HCT116 (cell line): ENCODE measurements at regions of chrX and their contacts with region 1.

Region 1: GRCh38 chrX:149950681-149951080 is 12.4 kb upstream of the EOLA2 start:
- DNase-seq: peak; percentile 45
- ATAC-seq: peak; percentile 83
- H3K4me3 ChIP-seq: no peak overlapping the region
- H3K27ac ChIP-seq: no peak overlapping the region
- H3K4me1 ChIP-seq: no peaks in the 10 kb centered on the region
- H3K27me3 ChIP-seq: no peaks in the 10 kb centered on the region
- CTCF ChIP-seq: peak; percentile 59 to 63 (median 61); a peak in 5 of 6 replicates
- POLR2A ChIP-seq: no peak
- RAD21 ChIP-seq: peak; percentile 63

Region 2: DNA sequence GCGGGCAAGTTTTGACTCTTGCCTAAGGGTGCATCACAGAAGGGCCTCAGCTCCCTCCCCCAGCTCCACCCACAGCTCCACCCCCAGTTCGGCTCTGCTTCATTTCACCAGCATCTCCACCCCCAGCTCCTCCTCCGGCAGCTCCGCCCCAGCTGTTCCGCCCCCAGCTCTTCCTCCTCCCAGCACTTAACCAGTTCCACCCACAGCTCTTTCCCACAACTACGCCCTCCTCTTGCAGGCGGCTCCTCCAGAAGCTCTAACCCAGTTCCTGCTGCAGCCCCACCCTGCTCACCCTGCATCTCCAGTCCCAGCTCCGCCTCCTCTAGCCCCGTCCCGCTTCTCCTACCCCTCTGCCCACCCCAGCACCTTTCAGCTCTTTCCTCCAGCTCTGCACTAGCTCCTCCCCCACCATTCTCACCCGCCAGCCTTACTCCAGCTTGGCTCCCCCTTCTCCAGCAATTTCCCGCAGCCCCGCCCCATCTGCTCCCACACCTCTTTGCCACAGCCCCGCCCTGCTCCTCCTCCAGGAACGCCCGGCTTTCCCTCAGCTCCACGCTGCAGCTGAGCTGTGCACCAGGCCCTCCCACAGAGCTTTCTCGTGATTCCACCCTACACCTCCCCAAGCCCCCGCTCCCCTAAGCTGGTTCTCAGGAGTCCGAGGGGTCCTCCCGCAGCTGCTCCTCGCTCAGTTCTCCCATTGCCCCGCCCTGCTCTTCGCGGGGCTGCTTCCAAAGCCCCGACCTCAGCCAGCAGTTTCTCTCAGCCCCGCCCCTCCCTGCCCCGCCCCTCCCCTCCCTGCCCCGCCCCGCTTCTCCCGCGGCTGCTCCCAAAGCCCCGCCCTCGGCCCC is 411.2 kb before region 1 on chrX:
- CTCF ChIA-PET with region 1: interaction called, 13 read pairs
- POLR2A ChIA-PET with region 1: no interaction called
- RAD21 ChIA-PET with region 1: no interaction called
- intact Hi-C with region 1: no loop called
- DNase-seq: peak; percentile 77
- ATAC-seq: peak; percentile 69
- H3K4me3 ChIP-seq: peak overlapping the region; percentile 35 to 51
- H3K27ac ChIP-seq: peak overlapping the region; percentile 53
- H3K4me1 ChIP-seq: peaks cover 3 to 4% of the 10 kb centered on the region in 2 experiments; a peak in 2 of 4 replicates
- H3K27me3 ChIP-seq: no peaks in the 10 kb centered on the region
- CTCF ChIP-seq: no peak
- POLR2A ChIP-seq: no peak
- RAD21 ChIP-seq: no peak